Activated B cell treated with CpG ODN at 0.5 μM for 24 hours (primary cell): ENCODE measurements at regions of chr18 and their contacts with region 1.

Region 1: GRCh38 chr18:45212181-45213039 is 402.9 kb upstream of the SLC14A2 start:
- DNase-seq: peak; percentile 66
- ATAC-seq: peak; percentile 100
- H3K4me3 Mint-ChIP-seq: no peak overlapping the region
- H3K27ac Mint-ChIP-seq: no peak overlapping the region
- H3K4me1 Mint-ChIP-seq: peaks cover 7% of the 10 kb centered on the region
- H3K27me3 Mint-ChIP-seq: no peaks in the 10 kb centered on the region
- CTCF ChIP-seq: peak; percentile 96

Region 2: DNA sequence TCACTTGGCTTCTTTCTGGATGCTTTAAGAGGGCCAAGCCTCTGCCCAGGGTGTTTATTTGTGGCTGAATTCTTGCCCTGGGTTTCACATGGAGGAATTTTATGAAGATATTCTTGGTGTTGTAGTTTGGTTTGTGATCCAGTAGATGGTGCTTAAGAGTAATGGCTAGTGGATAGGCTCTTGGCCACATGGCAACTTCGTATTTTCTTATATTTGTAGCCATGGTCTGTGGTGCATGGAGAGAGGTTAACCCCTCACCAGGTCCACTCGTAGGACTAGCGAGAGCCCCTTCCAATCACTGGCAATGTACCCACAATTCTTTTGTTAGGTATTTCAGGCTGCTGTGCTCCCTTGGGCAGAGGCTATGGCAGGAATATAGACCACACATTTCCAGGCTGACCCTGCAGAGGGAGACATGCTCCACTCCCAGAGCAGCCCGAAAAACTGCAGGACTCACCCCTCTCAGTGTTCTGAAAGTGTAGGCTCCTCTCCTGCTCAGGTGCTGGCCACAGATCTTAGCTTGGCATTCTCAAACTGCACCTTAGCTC is 1113.8 kb before region 1 on chr18:
- CTCF ChIA-PET with region 1: interaction called, 17 read pairs
- POLR2A ChIA-PET with region 1: no interaction called
- intact Hi-C with region 1: loop called (anchors 1 kb)
- DNase-seq: no peak
- ATAC-seq: peak; percentile 40
- H3K4me3 Mint-ChIP-seq: no peak overlapping the region
- H3K27ac Mint-ChIP-seq: no peak overlapping the region
- H3K4me1 Mint-ChIP-seq: no peaks in the 10 kb centered on the region
- H3K27me3 Mint-ChIP-seq: peaks cover 14% of the 10 kb centered on the region
- CTCF ChIP-seq: no peak

Region 3: GRCh38 chr18:44725300-44726096 is 486.9 kb before region 1 on chr18:
- CTCF ChIA-PET with region 1: interaction called, 8 read pairs
- POLR2A ChIA-PET with region 1: no interaction called
- intact Hi-C with region 1: loop called (anchors 2 kb)
- DNase-seq: peak; percentile 41
- ATAC-seq: peak; percentile 59
- H3K4me3 Mint-ChIP-seq: peak overlapping the region; percentile 70
- H3K27ac Mint-ChIP-seq: peak overlapping the region; percentile 88
- H3K4me1 Mint-ChIP-seq: peaks cover 99% of the 10 kb centered on the region
- H3K27me3 Mint-ChIP-seq: no peaks in the 10 kb centered on the region
- CTCF ChIP-seq: no peak

Region 4: DNA sequence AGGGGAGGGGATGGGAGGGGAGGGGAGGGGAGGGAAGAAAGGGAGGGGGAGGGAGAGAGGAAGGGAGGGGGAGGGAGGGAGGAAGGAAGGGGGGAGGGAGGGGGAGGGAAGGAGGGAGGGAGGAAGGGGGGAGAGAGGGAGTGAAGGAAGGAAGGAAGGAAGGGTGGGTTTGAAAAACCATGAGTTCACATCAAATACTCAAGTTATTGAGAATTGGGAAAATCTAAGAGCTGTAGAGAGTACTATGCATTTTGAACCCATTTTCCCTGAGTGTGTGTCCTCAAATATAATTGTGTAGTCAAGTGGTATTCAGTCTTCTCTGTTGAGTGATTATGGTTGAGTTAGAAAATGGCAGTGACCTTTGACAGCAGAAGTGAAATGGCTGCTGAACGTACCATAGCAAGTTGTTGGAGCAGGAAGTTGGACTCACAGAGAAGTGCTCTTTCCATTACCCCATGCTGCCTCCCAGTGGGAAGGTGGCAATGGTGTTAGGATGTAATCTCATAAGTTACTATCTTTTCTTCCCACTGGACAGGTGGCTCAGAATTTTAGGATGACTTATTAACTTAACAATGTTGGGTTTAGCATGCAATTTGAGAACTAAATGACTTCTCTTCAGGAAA is 317.1 kb before region 1 on chr18:
- CTCF ChIA-PET with region 1: interaction called, 17 read pairs
- POLR2A ChIA-PET with region 1: no interaction called
- intact Hi-C with region 1: loop called (anchors 2 kb)
- DNase-seq: no peak
- ATAC-seq: peak; percentile 62
- H3K4me3 Mint-ChIP-seq: no peak overlapping the region
- H3K27ac Mint-ChIP-seq: no peak overlapping the region
- H3K4me1 Mint-ChIP-seq: peaks cover 47% of the 10 kb centered on the region
- H3K27me3 Mint-ChIP-seq: no peaks in the 10 kb centered on the region
- CTCF ChIP-seq: no peak

Region 5: DNA sequence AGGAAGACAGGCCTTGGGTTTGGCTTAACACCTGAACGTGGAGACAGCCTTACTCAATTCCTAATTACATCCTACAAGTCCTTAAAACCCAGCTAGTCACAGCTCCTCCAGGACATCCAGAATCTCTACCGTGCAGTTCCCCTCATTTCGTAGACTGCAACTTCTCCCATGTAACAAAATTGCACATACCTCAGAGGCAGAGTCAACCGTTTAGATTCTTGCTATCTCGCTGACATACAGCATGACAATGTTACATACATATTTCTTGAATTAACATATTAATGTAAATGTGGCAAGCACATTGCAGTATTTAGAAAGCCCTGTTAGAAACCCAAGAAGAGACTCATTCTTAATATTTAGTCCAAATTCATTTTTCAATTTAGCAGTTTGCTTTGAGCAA is 173.0 kb before region 1 on chr18:
- CTCF ChIA-PET with region 1: no interaction called
- POLR2A ChIA-PET with region 1: no interaction called
- intact Hi-C with region 1: loop called (anchors 5 kb)
- DNase-seq: no peak
- ATAC-seq: no peak
- H3K4me3 Mint-ChIP-seq: no peak overlapping the region
- H3K27ac Mint-ChIP-seq: no peak overlapping the region
- H3K4me1 Mint-ChIP-seq: no peaks in the 10 kb centered on the region
- H3K27me3 Mint-ChIP-seq: no peaks in the 10 kb centered on the region
- CTCF ChIP-seq: no peak